HepG2 (cell line): ENCODE measurements at regions of chr2 and their contacts with region 1.

Region 1: GRCh38 chr2:228657807-228658402 is 476.4 kb upstream of the SPHKAP start:
- DNase-seq: peak; percentile 19
- ATAC-seq: no peak; the same call in 2 of the 3 replicates
- H3K4me3 ChIP-seq: no peak overlapping the region
- H3K27ac ChIP-seq: no peak overlapping the region
- H3K4me1 ChIP-seq: no peaks in the 10 kb centered on the region
- H3K27me3 ChIP-seq: no peaks in the 10 kb centered on the region
- CTCF ChIP-seq: peak; percentile 62
- EP300 ChIP-seq: no peak
- POLR2A ChIP-seq: no peak
- RAD21 ChIP-seq: no peak

Region 2: GRCh38 chr2:227908261-227909054 is 749.4 kb before region 1 on chr2:
- CTCF ChIA-PET with region 1: no interaction called
- POLR2A ChIA-PET with region 1: no interaction called
- in situ Hi-C with region 1: loop called (anchors 25 kb)
- intact Hi-C with region 1: no loop called
- DNase-seq: no peak
- ATAC-seq: no peak
- H3K4me3 ChIP-seq: no peak overlapping the region
- H3K27ac ChIP-seq: no peak overlapping the region
- H3K4me1 ChIP-seq: no peaks in the 10 kb centered on the region
- H3K27me3 ChIP-seq: no peaks in the 10 kb centered on the region
- CTCF ChIP-seq: no peak
- EP300 ChIP-seq: no peak
- POLR2A ChIP-seq: no peak
- RAD21 ChIP-seq: no peak

Region 3: GRCh38 chr2:228048838-228049490 is 608.9 kb before region 1 on chr2:
- CTCF ChIA-PET with region 1: interaction called, 3 read pairs
- POLR2A ChIA-PET with region 1: no interaction called
- in situ Hi-C with region 1: no loop called
- intact Hi-C with region 1: loop called (anchors 2 kb)
- DNase-seq: peak; percentile 49
- ATAC-seq: peak; percentile 100
- H3K4me3 ChIP-seq: no peak overlapping the region
- H3K27ac ChIP-seq: no peak overlapping the region
- H3K4me1 ChIP-seq: no peaks in the 10 kb centered on the region
- H3K27me3 ChIP-seq: no peaks in the 10 kb centered on the region
- CTCF ChIP-seq: peak; percentile 80
- EP300 ChIP-seq: no peak
- POLR2A ChIP-seq: no peak
- RAD21 ChIP-seq: peak; percentile 38; the same call in 1 of the 2 replicates

Region 4: GRCh38 chr2:228318218-228318617 is 339.7 kb before region 1 on chr2:
- CTCF ChIA-PET with region 1: no interaction called
- POLR2A ChIA-PET with region 1: no interaction called
- in situ Hi-C with region 1: no loop called
- intact Hi-C with region 1: loop called (anchors 2 kb)
- DNase-seq: peak; percentile 12
- ATAC-seq: peak; percentile 99
- H3K4me3 ChIP-seq: no peak overlapping the region
- H3K27ac ChIP-seq: no peak overlapping the region
- H3K4me1 ChIP-seq: no peaks in the 10 kb centered on the region
- H3K27me3 ChIP-seq: no peaks in the 10 kb centered on the region
- CTCF ChIP-seq: peak; percentile 50
- EP300 ChIP-seq: no peak
- POLR2A ChIP-seq: no peak
- RAD21 ChIP-seq: no peak

Region 5: GRCh38 chr2:228446734-228447133 is 211.2 kb before region 1 on chr2:
- CTCF ChIA-PET with region 1: no interaction called
- POLR2A ChIA-PET with region 1: no interaction called
- in situ Hi-C with region 1: no loop called
- intact Hi-C with region 1: no loop called
- DNase-seq: no peak
- ATAC-seq: no peak
- H3K4me3 ChIP-seq: no peak overlapping the region
- H3K27ac ChIP-seq: no peak overlapping the region
- H3K4me1 ChIP-seq: no peaks in the 10 kb centered on the region
- H3K27me3 ChIP-seq: no peaks in the 10 kb centered on the region
- CTCF ChIP-seq: no peak
- EP300 ChIP-seq: no peak
- POLR2A ChIP-seq: no peak
- RAD21 ChIP-seq: no peak

Region 6: GRCh38 chr2:228974169-228974568 is 316.3 kb after region 1 on chr2:
- CTCF ChIA-PET with region 1: no interaction called
- POLR2A ChIA-PET with region 1: no interaction called
- in situ Hi-C with region 1: no loop called
- intact Hi-C with region 1: no loop called
- DNase-seq: no peak
- ATAC-seq: no peak
- H3K4me3 ChIP-seq: no peak overlapping the region
- H3K27ac ChIP-seq: no peak overlapping the region
- H3K4me1 ChIP-seq: no peaks in the 10 kb centered on the region
- H3K27me3 ChIP-seq: no peaks in the 10 kb centered on the region
- CTCF ChIP-seq: no peak
- EP300 ChIP-seq: no peak
- POLR2A ChIP-seq: no peak
- RAD21 ChIP-seq: no peak